ENCODE measurements at regions of chr10 and their contacts with region 1.

Region 1: DNA sequence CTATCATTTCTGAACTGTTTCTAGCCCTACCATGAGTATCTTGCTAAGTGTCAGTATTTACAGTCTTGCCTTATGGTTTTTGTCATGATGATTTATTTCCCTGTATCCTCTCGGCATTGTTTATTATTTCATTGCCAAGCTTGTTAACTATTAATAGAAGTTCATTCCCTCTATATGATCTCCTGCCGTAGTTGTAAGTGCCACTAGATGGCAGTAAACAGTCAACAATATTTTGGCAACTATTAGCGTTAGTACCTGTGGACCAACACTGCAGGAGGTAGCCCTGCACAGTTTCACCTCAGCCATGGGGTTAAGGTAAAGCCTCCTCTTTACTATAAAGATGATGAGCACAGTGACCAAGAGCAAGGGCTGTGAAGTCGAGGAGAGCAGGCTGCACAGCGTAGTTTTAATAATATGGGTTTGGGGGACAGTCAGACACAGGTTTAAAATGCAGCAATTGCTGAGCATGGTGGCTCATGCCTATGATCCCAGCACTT is 26.1 kb upstream of the CCNJ start:
- DNase-seq: peak; percentile 52
- H3K4me3 ChIP-seq: no peak overlapping the region
- H3K27ac ChIP-seq: no peak overlapping the region
- H3K4me1 ChIP-seq: no peaks in the 10 kb centered on the region
- H3K27me3 ChIP-seq: peaks cover 7% of the 10 kb centered on the region
- CTCF ChIP-seq: peak; percentile 73 to 75

Region 2: GRCh38 chr10:96292971-96293920 is 276.0 kb after region 1 on chr10:
- CTCF ChIA-PET with region 1: interaction called, 6 read pairs
- dilution Hi-C with region 1: no loop called
- in situ Hi-C with region 1: loop called in 1 of 2 experiments (anchors 10 kb)
- intact Hi-C with region 1: loop called (anchors 1 kb)
- DNase-seq: peak; percentile 41
- H3K4me3 ChIP-seq: no peak overlapping the region
- H3K27ac ChIP-seq: no peak overlapping the region
- H3K4me1 ChIP-seq: peaks cover 1% of the 10 kb centered on the region
- H3K27me3 ChIP-seq: no peaks in the 10 kb centered on the region
- CTCF ChIP-seq: peak; percentile 47 to 66

Region 3: GRCh38 chr10:96306516-96306915 is 289.3 kb after region 1 on chr10:
- CTCF ChIA-PET with region 1: no interaction called
- dilution Hi-C with region 1: no loop called
- in situ Hi-C with region 1: no loop called
- intact Hi-C with region 1: no loop called
- DNase-seq: no peak
- H3K4me3 ChIP-seq: no peak overlapping the region
- H3K27ac ChIP-seq: no peak overlapping the region
- H3K4me1 ChIP-seq: no peaks in the 10 kb centered on the region
- H3K27me3 ChIP-seq: no peaks in the 10 kb centered on the region
- CTCF ChIP-seq: no peak